B cell (primary cell): ENCODE measurements at regions of chr13 and their contacts with region 1.

Region 1: DNA sequence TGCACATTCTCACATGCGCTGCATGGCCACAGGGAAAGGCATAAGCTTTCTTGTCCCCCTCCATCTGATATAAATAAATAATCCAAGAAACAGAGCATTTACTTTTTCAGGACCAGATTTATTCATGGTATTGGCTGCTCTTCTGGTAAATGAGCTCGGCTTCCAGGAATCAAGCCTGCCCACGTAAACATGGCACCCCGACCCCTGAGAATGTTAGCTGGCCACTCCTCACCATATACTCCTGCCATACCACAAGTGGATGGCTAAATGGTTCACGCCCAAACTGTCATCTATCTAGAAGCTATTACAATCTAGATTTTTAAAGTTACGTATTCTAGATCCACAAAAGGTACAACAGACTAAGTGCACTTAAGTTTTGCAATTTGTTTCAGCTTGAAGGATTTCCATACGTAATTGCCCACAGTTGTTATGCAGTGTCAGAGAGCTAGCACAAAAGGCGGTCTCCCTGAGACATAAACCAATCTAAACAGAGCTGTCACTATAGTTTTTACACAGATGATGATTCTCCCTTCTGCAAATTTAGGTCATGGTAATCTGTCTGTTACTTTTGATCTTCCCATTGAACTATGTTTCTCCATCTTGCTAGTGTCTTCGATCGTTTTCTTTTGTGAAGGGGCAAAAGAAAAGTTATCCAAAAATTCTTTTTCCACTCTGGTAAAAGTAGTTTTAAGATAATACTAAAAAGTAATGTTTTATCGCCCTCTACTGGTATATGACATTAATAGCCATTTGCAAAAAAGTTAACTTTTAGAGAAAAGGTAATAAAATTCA is 16.2 kb upstream of the FOXO1 start:
- DNase-seq: peak; percentile 55
- ATAC-seq: peak; percentile 45
- H3K4me3 ChIP-seq: no peak overlapping the region
- H3K4me3 Mint-ChIP-seq: peak overlapping the region; percentile 23
- H3K27ac ChIP-seq: no peak overlapping the region
- H3K27ac Mint-ChIP-seq: no peak overlapping the region
- H3K4me1 ChIP-seq: peaks cover 19 to 22% of the 10 kb centered on the region in 2 donors
- H3K4me1 Mint-ChIP-seq: peaks cover 19% of the 10 kb centered on the region
- H3K27me3 ChIP-seq: no peaks in the 10 kb centered on the region
- H3K27me3 Mint-ChIP-seq: no peaks in the 10 kb centered on the region
- CTCF ChIP-seq: peak; percentile 91

Region 2: DNA sequence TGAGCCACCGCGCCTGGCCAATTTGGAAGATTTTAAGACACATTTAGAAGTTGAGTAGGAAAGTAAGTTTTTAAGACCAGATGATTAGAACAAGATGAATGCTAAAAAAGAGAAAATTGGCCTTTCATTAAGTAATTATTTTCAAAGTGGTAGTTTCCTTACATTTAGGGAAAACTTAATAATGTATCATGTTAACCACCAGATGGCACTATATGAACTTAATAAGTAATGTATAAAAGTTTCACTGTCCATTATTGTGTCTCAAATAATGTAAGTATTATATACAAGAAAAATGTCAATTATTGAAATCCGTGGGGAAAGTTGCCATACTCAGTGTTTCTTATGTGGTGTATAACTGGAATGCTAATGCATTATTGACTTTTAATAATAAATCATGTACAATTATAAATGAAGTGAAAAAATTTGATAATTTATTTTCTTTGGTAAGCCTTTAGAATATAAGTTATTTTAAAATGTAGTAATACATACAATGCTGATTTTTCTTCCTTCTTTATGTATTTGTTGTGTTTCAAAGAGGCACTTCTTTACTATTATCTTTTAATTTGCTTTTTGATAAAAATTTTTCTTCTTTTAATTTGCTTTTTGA is 998.0 kb before region 1 on chr13:
- CTCF ChIA-PET with region 1: interaction called, 42 read pairs
- POLR2A ChIA-PET with region 1: no interaction called
- intact Hi-C with region 1: loop called (anchors 1 kb)
- DNase-seq: peak; percentile 47
- ATAC-seq: no peak
- H3K4me3 ChIP-seq: no peak overlapping the region
- H3K4me3 Mint-ChIP-seq: no peak overlapping the region
- H3K27ac ChIP-seq: no peak overlapping the region
- H3K27ac Mint-ChIP-seq: no peak overlapping the region
- H3K4me1 ChIP-seq: peaks cover 0 to 7% of the 10 kb centered on the region in 2 donors
- H3K4me1 Mint-ChIP-seq: peaks cover 13% of the 10 kb centered on the region
- H3K27me3 ChIP-seq: no peaks in the 10 kb centered on the region
- H3K27me3 Mint-ChIP-seq: no peaks in the 10 kb centered on the region
- CTCF ChIP-seq: peak; percentile 77

Region 3: GRCh38 chr13:39942552-39943273 is 739.9 kb before region 1 on chr13:
- CTCF ChIA-PET with region 1: interaction called, 239 read pairs
- POLR2A ChIA-PET with region 1: interaction called, 5 read pairs
- intact Hi-C with region 1: loop called (anchors 1 kb)
- DNase-seq: peak; percentile 75
- ATAC-seq: peak; percentile 99
- H3K4me3 ChIP-seq: no peak overlapping the region
- H3K4me3 Mint-ChIP-seq: no peak overlapping the region
- H3K27ac ChIP-seq: no peak overlapping the region
- H3K27ac Mint-ChIP-seq: no peak overlapping the region
- H3K4me1 ChIP-seq: peaks cover 0 to 2% of the 10 kb centered on the region in 2 donors
- H3K4me1 Mint-ChIP-seq: peaks cover 1% of the 10 kb centered on the region
- H3K27me3 ChIP-seq: peaks cover 0 to 4% (median 0%) of the 10 kb centered on the region in 4 experiments
- H3K27me3 Mint-ChIP-seq: peaks cover 4% of the 10 kb centered on the region
- CTCF ChIP-seq: peak; percentile 98

Region 4: DNA sequence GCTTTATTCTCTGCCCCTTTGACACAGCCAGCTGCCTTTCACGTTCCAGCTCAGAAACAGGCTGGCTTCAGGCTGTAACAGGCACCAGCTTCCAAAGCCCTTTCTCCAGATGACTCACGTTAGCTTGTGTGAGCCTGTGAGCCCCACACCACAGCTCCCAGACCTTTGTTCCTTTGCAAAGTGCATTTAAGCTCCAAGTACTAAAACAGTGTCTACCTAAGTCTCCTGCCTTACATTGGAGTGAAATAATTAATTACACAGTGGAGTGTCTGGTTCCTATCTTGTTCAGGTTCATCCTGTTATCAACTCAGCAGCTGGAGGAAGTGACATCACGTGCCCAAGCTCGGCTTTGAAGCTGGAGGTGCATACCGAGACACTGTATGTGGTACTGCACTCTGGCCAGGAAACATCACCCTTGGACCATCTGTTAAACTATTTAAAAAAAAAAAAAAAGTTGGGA is 492.0 kb before region 1 on chr13:
- CTCF ChIA-PET with region 1: interaction called, 13 read pairs
- POLR2A ChIA-PET with region 1: no interaction called
- intact Hi-C with region 1: no loop called
- DNase-seq: peak; percentile 65
- ATAC-seq: peak; percentile 92
- H3K4me3 ChIP-seq: no peak overlapping the region
- H3K4me3 Mint-ChIP-seq: peak overlapping the region; percentile 34
- H3K27ac ChIP-seq: peak overlapping the region in 1 of 2 donors; percentile 17
- H3K27ac Mint-ChIP-seq: peak overlapping the region; percentile 74
- H3K4me1 ChIP-seq: peaks cover 23 to 27% of the 10 kb centered on the region in 2 donors
- H3K4me1 Mint-ChIP-seq: peaks cover 23% of the 10 kb centered on the region
- H3K27me3 ChIP-seq: no peaks in the 10 kb centered on the region
- H3K27me3 Mint-ChIP-seq: no peaks in the 10 kb centered on the region
- CTCF ChIP-seq: no peak

Region 5: DNA sequence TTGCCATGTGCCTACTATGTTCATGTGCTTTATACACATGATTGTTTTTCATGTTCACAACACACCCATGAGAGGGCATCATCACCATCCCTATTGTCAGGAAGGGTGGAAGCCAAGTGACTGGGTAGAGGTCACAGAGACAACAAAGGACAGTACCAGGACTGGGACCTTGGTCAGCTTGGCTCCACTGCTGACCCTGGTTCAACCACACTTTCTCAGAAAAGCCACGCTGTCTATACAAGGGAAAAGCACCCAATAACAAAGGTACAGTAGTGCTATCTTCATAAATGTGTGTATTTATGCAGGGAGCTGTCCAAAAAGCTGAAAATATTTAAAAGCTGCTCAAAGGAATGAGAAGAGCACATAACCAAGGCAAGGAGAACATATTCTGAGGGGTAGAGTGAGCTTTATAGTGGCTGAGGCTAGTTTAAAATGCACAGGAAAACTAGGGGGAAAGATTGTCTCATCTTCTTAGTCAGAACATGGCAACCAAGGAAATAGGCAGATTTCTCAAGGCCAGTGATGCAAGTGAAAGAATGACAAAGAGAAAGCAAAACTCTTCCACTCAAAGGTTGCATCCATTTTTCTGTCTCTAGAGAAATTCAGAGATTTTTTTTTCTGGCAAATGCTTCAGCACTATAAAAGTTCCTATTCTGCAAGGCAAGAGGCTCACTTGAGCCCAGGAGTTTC is 431.2 kb before region 1 on chr13:
- CTCF ChIA-PET with region 1: interaction called, 10 read pairs
- POLR2A ChIA-PET with region 1: no interaction called
- intact Hi-C with region 1: no loop called
- DNase-seq: peak; percentile 19
- ATAC-seq: peak; percentile 56
- H3K4me3 ChIP-seq: no peak overlapping the region
- H3K4me3 Mint-ChIP-seq: no peak overlapping the region
- H3K27ac ChIP-seq: no peak overlapping the region
- H3K27ac Mint-ChIP-seq: peak overlapping the region; percentile 3
- H3K4me1 ChIP-seq: peaks cover 8 to 13% of the 10 kb centered on the region in 2 donors
- H3K4me1 Mint-ChIP-seq: peaks cover 12% of the 10 kb centered on the region
- H3K27me3 ChIP-seq: no peaks in the 10 kb centered on the region
- H3K27me3 Mint-ChIP-seq: no peaks in the 10 kb centered on the region
- CTCF ChIP-seq: no peak

Region 6: GRCh38 chr13:40597740-40598370 is 84.8 kb before region 1 on chr13:
- CTCF ChIA-PET with region 1: no interaction called
- POLR2A ChIA-PET with region 1: no interaction called
- intact Hi-C with region 1: no loop called
- DNase-seq: no peak
- ATAC-seq: no peak
- H3K4me3 ChIP-seq: no peak overlapping the region
- H3K4me3 Mint-ChIP-seq: peak overlapping the region; percentile 32
- H3K27ac ChIP-seq: peak overlapping the region; percentile 42 to 85
- H3K27ac Mint-ChIP-seq: peak overlapping the region; percentile 62
- H3K4me1 ChIP-seq: peaks cover 83 to 94% of the 10 kb centered on the region in 2 donors
- H3K4me1 Mint-ChIP-seq: peaks cover 88% of the 10 kb centered on the region
- H3K27me3 ChIP-seq: no peaks in the 10 kb centered on the region
- H3K27me3 Mint-ChIP-seq: no peaks in the 10 kb centered on the region
- CTCF ChIP-seq: no peak

Region 7: DNA sequence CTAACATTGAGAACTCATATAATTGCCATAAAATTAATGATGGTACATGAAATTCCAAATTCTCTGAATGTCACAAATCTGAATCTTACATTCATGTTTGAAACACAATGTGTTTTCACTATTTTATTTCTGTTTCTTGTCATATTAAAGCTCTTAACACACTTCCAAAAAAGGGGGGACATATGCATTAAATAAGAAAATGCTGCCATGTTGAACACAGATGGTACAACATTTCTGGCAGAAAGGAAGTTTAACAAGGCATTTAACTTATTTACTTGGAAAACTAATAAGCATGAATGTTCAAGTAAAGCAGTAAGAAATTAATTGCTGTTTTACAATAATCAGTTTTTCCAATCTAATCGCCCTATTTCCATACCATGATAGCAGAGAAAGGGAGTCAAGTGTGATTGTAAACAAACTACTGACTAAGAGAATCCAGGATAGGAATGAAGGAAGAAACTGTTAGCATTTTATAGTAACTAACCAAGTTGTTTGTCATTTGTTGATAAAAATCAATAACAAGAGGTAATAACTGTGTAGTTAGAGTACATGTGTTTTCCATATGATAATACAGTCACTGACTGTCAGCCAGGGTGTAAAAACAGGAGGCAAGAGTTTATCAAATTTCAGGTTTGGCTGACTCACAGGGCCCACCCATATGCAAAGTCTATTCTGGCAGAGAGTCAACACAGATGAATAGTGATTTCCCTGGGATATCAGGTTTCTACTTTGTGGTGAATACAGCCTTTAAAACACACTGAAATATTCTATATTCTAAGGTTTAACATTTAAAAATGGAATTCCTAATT is 10.5 kb before region 1 on chr13:
- CTCF ChIA-PET with region 1: interaction called, 36 read pairs
- POLR2A ChIA-PET with region 1: no interaction called
- intact Hi-C with region 1: loop called (anchors 1 kb)
- DNase-seq: no peak
- ATAC-seq: no peak
- H3K4me3 ChIP-seq: no peak overlapping the region
- H3K4me3 Mint-ChIP-seq: no peak overlapping the region
- H3K27ac ChIP-seq: no peak overlapping the region
- H3K27ac Mint-ChIP-seq: no peak overlapping the region
- H3K4me1 ChIP-seq: peaks cover 17 to 18% of the 10 kb centered on the region in 2 donors
- H3K4me1 Mint-ChIP-seq: peaks cover 25% of the 10 kb centered on the region
- H3K27me3 ChIP-seq: no peaks in the 10 kb centered on the region
- H3K27me3 Mint-ChIP-seq: no peaks in the 10 kb centered on the region
- CTCF ChIP-seq: no peak

Region 8: GRCh38 chr13:41029629-41030028 is 347.0 kb after region 1 on chr13:
- CTCF ChIA-PET with region 1: no interaction called
- POLR2A ChIA-PET with region 1: no interaction called
- intact Hi-C with region 1: no loop called
- DNase-seq: no peak
- ATAC-seq: no peak
- H3K4me3 ChIP-seq: no peak overlapping the region
- H3K4me3 Mint-ChIP-seq: no peak overlapping the region
- H3K27ac ChIP-seq: no peak overlapping the region
- H3K27ac Mint-ChIP-seq: no peak overlapping the region
- H3K4me1 ChIP-seq: peaks cover 3% of the 10 kb centered on the region in 2 donors
- H3K4me1 Mint-ChIP-seq: peaks cover 24% of the 10 kb centered on the region
- H3K27me3 ChIP-seq: no peaks in the 10 kb centered on the region
- H3K27me3 Mint-ChIP-seq: no peaks in the 10 kb centered on the region
- CTCF ChIP-seq: no peak